CD8-positive, alpha-beta T cell (primary cell): ENCODE measurements at regions of chr13 and their contacts with region 1.

Region 1: GRCh38 chr13:110216398-110217041 is 90.4 kb downstream of the COL4A1 start:
- DNase-seq: no peak
- ATAC-seq: no peak
- H3K4me3 ChIP-seq: no peak overlapping the region
- H3K4me3 Mint-ChIP-seq: no peak overlapping the region
- H3K27ac ChIP-seq: no peak overlapping the region
- H3K27ac Mint-ChIP-seq: no peak overlapping the region
- H3K4me1 ChIP-seq: no peaks in the 10 kb centered on the region
- H3K4me1 Mint-ChIP-seq: no peaks in the 10 kb centered on the region
- H3K27me3 ChIP-seq: no peaks in the 10 kb centered on the region
- H3K27me3 Mint-ChIP-seq: peaks cover 4% of the 10 kb centered on the region
- CTCF ChIP-seq: no peak

Region 2: DNA sequence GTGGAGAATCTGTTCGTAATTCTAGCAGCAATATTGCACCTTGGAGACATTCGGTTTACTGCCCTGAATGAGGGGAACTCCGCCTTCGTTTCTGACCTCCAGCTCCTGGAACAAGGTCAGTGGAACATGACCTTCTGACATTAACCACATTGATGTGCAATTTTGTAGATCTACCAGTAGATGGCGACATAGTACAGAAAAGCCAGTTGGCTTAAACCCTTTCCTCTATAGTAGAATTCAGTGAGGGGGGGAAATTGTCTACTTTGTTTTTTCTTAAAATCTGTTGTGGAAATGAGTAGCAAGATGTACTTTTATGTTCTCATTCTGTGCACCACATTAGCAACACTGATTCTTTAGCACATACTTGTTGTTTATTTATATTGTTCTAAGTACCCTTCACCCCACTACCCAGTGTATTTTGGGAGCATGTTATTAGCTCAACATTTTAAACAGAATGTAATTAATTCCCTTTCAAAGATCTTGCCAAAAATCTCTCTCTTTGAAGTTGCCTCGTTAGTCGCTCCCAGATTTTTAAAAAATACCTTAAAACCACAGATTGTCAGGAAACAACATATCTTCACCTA is 1254.9 kb before region 1 on chr13:
- CTCF ChIA-PET with region 1: no interaction called
- POLR2A ChIA-PET with region 1: no interaction called
- intact Hi-C with region 1: loop called in 1 of 2 experiments (anchors 5 kb)
- DNase-seq: peak in 5 of 9 experiments; percentile 5 to 57 (median 16)
- ATAC-seq: peak; percentile 52
- H3K4me3 ChIP-seq: no peak overlapping the region
- H3K4me3 Mint-ChIP-seq: no peak overlapping the region
- H3K27ac ChIP-seq: no peak overlapping the region
- H3K27ac Mint-ChIP-seq: no peak overlapping the region
- H3K4me1 ChIP-seq: no peaks in the 10 kb centered on the region
- H3K4me1 Mint-ChIP-seq: no peaks in the 10 kb centered on the region
- H3K27me3 ChIP-seq: no peaks in the 10 kb centered on the region
- H3K27me3 Mint-ChIP-seq: peaks cover 7% of the 10 kb centered on the region
- CTCF ChIP-seq: peak; percentile 97

Region 3: GRCh38 chr13:110044551-110045111 is 171.9 kb before region 1 on chr13:
- CTCF ChIA-PET with region 1: no interaction called
- POLR2A ChIA-PET with region 1: no interaction called
- intact Hi-C with region 1: no loop called
- DNase-seq: no peak
- ATAC-seq: no peak
- H3K4me3 ChIP-seq: no peak overlapping the region
- H3K4me3 Mint-ChIP-seq: no peak overlapping the region
- H3K27ac ChIP-seq: no peak overlapping the region
- H3K27ac Mint-ChIP-seq: no peak overlapping the region
- H3K4me1 ChIP-seq: no peaks in the 10 kb centered on the region
- H3K4me1 Mint-ChIP-seq: no peaks in the 10 kb centered on the region
- H3K27me3 ChIP-seq: peaks cover 0 to 9% of the 10 kb centered on the region in 2 experiments
- H3K27me3 Mint-ChIP-seq: peaks cover 16% of the 10 kb centered on the region
- CTCF ChIP-seq: no peak

Region 4: DNA sequence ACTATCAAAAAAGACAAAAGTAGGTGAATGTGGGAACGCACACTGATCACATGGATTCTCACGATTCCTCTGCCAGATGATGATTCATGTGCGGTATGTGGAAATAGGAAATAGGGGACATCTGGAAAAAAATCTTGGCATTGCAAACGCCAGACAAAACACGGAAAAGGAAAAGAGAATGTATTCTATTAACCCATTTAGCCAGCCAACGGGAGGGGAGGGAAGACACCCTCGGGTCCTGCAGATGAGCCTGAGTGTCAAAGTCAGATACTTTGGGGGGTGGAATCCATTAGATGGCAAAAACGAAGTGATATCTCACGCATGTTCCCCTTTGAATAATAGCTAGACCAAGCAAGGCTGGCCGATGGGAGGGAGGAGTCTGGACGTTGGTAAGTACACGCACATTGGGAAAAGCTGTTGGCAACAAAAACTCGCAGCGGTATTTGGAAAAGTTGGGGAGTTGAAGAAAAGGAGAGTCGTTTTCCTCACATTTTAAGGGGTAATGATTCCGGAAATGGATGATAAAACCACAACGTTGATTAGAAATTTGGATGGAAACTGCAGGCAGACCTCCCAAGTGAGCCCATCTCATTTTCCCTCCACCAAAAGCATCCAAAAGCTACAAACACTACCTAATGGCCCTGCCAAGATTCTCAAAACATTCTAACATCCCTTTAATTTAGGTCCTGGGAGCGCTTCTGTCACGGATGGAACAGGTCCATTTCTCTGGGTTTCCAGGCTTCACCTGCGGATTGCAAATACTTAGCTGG is 16.8 kb after region 1 on chr13:
- CTCF ChIA-PET with region 1: interaction called, 17 read pairs
- POLR2A ChIA-PET with region 1: no interaction called
- intact Hi-C with region 1: no loop called
- DNase-seq: no peak
- ATAC-seq: no peak
- H3K4me3 ChIP-seq: no peak overlapping the region
- H3K4me3 Mint-ChIP-seq: no peak overlapping the region
- H3K27ac ChIP-seq: no peak overlapping the region
- H3K27ac Mint-ChIP-seq: no peak overlapping the region
- H3K4me1 ChIP-seq: no peaks in the 10 kb centered on the region
- H3K4me1 Mint-ChIP-seq: no peaks in the 10 kb centered on the region
- H3K27me3 ChIP-seq: no peaks in the 10 kb centered on the region
- H3K27me3 Mint-ChIP-seq: peaks cover 41% of the 10 kb centered on the region
- CTCF ChIP-seq: no peak

Region 5: DNA sequence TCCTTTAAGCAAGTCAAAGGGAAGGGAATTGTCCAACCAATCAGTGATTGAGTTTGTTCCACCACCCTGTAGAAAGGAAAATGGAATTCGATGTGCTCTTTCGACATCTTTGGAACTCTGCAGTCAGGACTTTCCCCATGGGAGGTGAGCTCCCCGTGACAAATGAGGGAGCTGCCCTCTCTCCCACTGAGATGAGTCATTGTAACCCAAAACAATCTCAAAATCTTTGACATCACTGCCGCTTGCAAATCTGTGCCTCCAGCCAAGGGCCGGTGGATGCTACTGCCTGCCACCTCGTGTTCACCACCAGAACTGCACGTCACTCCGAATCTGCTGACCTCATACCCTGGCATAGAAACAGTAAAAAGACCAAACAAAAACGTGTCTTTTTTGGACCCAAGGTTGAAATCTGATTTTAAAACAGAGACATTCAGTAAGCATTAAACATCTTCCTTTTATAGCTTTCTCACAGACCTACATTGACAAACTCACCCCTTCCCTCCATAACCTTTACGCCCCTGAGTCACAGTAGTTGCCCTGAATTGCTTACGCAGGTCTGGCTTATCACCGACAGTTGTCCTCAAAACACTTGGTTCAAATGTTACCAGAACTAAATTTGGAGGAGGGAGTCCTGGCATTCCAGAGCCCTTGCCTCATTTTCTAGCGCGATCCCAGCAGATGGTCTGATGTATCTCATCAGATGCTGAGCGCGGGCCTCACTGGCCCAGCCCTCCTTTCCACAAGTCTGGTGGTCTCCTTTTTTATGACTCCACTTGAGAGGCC is 195.8 kb after region 1 on chr13:
- CTCF ChIA-PET with region 1: interaction called, 33 read pairs
- POLR2A ChIA-PET with region 1: no interaction called
- intact Hi-C with region 1: no loop called
- DNase-seq: peak in 8 of 9 experiments; percentile 15 to 66 (median 48)
- ATAC-seq: peak; percentile 46
- H3K4me3 ChIP-seq: no peak overlapping the region
- H3K4me3 Mint-ChIP-seq: no peak overlapping the region
- H3K27ac ChIP-seq: no peak overlapping the region
- H3K27ac Mint-ChIP-seq: no peak overlapping the region
- H3K4me1 ChIP-seq: no peaks in the 10 kb centered on the region
- H3K4me1 Mint-ChIP-seq: no peaks in the 10 kb centered on the region
- H3K27me3 ChIP-seq: peaks cover 2 to 5% of the 10 kb centered on the region in 2 experiments
- H3K27me3 Mint-ChIP-seq: peaks cover 52% of the 10 kb centered on the region
- CTCF ChIP-seq: peak; percentile 79